ENCODE measurements at regions of chr4 and their contacts with region 1.

Region 1: GRCh38 chr4:183602557-183603027 is 56.4 kb downstream of the RWDD4 start:
- DNase-seq: no peak

Region 2: GRCh38 chr4:183471946-183472708 is 130.5 kb before region 1 on chr4:
- intact Hi-C with region 1: loop called (anchors 2 kb)
- DNase-seq: peak; percentile 56 to 96 (median 88)